ENCODE measurements at regions of chr7 and their contacts with region 1.

Region 1: GRCh38 chr7:95396136-95397032 is at the start of gene PON3:
- DNase-seq: no peak
- H3K4me3 ChIP-seq: peak within 1 kb of the TSS in 54 of 59 donors; percentile 4 to 60 (median 40)
- H3K27ac ChIP-seq: no peak within 1 kb of the TSS
- H3K27me3 ChIP-seq: peaks cover 0 to 38% (median 9%) of the 10 kb centered on the region in 45 donors
- CTCF ChIP-seq: peak in 2 of 56 donors; percentile 11 to 20
- total RNA-seq, gene PON3: 0.34 to 8.6 (median 2.4) TPM in 117 of 120 experiments, not detected in the others

Region 2: DNA sequence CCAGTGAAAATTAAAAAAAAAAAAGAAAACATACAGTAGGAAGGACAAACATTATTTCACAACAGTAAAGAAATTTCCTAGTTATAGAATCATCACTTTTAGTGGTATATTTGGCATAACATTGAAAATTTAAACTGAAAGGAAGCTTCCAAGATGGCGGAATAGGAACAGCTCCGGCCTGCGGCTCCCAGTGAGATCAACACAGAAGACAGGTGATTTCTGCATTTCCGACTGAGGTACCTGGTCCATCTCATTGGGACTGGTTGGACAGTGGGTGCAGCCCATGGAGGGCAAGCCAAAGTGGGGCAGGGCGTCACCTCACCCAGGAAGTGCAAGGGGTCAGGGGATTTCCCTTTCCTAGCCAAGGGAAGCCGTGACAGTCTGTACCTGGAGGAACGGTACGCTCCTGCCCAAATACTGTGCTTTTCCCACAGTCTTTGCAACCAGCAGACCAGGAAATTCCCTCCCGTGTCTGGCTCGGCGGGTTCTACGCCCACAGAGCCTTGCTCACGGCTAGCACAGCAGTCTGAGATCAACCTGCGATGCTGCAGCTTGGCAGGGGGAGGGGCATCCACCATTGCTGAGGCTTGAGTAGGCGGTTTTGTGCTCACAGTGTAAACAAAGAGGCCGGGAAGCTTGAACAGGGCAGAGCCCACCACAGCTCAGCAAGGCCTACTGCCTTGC is 19.6 kb before region 1 on chr7:
- intact Hi-C with region 1: loop called in 1 of 2 experiments (anchors 2 kb)
- DNase-seq: no peak
- H3K4me3 ChIP-seq: no peak overlapping the region
- H3K27ac ChIP-seq: no peak overlapping the region
- H3K27me3 ChIP-seq: peaks cover 0 to 3% (median 0%) of the 10 kb centered on the region in 45 donors
- CTCF ChIP-seq: no peak